B cell (primary cell): ENCODE measurements at regions of chr12 and their contacts with region 1.

Region 1: DNA sequence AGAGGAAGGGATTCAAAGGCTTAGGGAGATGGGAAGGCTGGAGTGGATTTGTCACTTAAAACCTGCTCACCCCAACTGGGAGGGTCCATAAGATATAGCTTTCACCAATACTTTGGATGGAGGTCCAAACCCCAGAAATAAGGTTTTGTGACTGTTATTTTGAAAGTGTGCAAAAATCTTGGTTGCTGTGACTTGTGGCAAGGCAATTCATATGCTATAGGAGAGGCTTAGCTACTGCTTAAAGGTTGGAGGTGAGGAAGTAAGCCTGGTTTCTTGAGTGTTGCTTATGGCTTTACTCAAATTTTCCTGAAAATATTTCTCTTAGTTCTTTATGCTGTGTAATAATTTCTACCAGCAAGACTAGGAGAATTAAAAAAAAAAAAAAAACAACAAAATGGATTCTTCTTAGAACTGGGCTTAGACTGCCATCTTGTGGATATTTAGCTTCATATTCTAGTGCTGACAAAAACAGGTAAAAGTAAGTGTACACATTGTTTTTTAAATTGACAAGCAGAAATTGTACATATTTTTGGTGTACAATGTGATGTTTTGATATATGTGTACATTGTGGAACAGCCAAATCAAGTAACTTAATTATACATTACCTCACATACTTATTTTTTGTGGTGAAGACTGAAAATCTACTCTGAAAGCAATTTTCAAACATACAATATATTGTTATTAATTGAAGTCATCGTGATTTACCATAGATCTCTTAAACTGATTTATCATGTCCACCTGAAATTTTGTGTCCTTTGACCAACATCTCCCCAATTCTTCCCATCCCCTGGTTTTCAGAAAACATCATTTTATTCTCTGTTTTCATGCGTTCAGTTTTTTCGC is 23.0 kb downstream of the PDE6H start:
- DNase-seq: peak; percentile 79
- ATAC-seq: peak; percentile 45
- H3K4me3 ChIP-seq: no peak overlapping the region
- H3K4me3 Mint-ChIP-seq: no peak overlapping the region
- H3K27ac ChIP-seq: no peak overlapping the region
- H3K27ac Mint-ChIP-seq: peak overlapping the region; percentile 38
- H3K4me1 ChIP-seq: peaks cover 34 to 36% of the 10 kb centered on the region in 2 donors
- H3K4me1 Mint-ChIP-seq: peaks cover 39% of the 10 kb centered on the region
- H3K27me3 ChIP-seq: peaks cover 0 to 4% (median 1%) of the 10 kb centered on the region in 4 experiments
- H3K27me3 Mint-ChIP-seq: peaks cover 5% of the 10 kb centered on the region
- CTCF ChIP-seq: peak; percentile 83

Region 2: DNA sequence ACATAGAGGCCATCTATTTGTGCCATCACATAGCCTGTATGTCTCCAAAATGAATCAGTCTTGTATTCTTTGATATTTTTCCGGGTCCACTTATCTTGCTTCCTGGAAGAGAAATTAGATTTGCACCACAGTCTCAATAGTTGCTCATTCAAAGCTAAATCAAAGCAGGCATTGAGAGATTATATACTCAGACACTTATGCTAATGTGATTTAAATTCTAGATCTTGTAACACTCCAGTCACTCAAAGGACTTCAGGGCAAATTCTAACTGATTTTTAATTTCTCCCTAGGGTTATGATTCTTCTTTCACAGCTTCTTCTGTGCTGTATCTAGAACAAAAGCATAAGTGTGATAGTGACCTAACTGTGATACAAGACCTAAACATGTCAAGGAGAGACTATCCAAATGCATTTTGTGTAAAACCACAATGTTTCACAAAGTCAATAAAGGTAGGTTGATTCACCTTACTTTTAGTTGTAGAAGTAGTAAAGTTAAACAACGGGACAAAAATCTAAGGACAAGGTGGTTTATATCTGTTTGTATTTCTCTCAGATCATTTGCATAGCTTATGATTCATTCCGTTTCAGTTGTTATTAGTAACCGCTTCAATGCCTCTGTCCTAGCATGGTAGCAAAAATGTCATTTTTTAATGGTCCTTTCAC is 454.9 kb before region 1 on chr12:
- CTCF ChIA-PET with region 1: no interaction called
- POLR2A ChIA-PET with region 1: no interaction called
- intact Hi-C with region 1: no loop called
- DNase-seq: no peak
- ATAC-seq: no peak
- H3K4me3 ChIP-seq: no peak overlapping the region
- H3K4me3 Mint-ChIP-seq: no peak overlapping the region
- H3K27ac ChIP-seq: no peak overlapping the region
- H3K27ac Mint-ChIP-seq: no peak overlapping the region
- H3K4me1 ChIP-seq: no peaks in the 10 kb centered on the region
- H3K4me1 Mint-ChIP-seq: peaks cover 2% of the 10 kb centered on the region
- H3K27me3 ChIP-seq: no peaks in the 10 kb centered on the region
- H3K27me3 Mint-ChIP-seq: no peaks in the 10 kb centered on the region
- CTCF ChIP-seq: no peak

Region 3: DNA sequence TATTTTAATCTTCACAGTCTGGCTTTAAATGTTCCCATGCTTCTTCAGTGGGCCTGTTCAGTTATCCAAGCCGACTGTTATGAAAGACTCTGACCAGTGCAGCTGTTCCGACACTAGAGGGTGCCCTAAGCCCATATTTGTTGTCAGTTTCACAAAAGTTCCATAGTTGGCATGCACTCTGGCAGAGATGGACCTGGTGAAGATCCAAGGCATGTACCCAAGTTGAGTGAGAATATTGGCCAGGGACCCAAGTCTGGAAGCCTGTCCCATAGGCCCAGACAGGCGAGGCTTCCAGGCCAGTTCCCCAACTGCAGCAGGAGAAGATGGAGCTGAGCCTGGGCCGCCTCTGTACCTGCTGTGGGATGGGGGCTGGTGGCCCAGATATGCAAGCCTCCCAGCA is 272.0 kb before region 1 on chr12:
- CTCF ChIA-PET with region 1: interaction called, 26 read pairs
- POLR2A ChIA-PET with region 1: no interaction called
- intact Hi-C with region 1: loop called (anchors 1 kb)
- DNase-seq: peak; percentile 65
- ATAC-seq: peak; percentile 56
- H3K4me3 ChIP-seq: no peak overlapping the region
- H3K4me3 Mint-ChIP-seq: no peak overlapping the region
- H3K27ac ChIP-seq: no peak overlapping the region
- H3K27ac Mint-ChIP-seq: no peak overlapping the region
- H3K4me1 ChIP-seq: no peaks in the 10 kb centered on the region
- H3K4me1 Mint-ChIP-seq: no peaks in the 10 kb centered on the region
- H3K27me3 ChIP-seq: no peaks in the 10 kb centered on the region
- H3K27me3 Mint-ChIP-seq: peaks cover 13% of the 10 kb centered on the region
- CTCF ChIP-seq: peak; percentile 79

Region 4: GRCh38 chr12:14845350-14845750 is 150.5 kb before region 1 on chr12:
- CTCF ChIA-PET with region 1: interaction called, 192 read pairs
- POLR2A ChIA-PET with region 1: no interaction called
- intact Hi-C with region 1: loop called (anchors 1 kb)
- DNase-seq: peak; percentile 72
- ATAC-seq: peak; percentile 81
- H3K4me3 ChIP-seq: no peak overlapping the region
- H3K4me3 Mint-ChIP-seq: no peak overlapping the region
- H3K27ac ChIP-seq: no peak overlapping the region
- H3K27ac Mint-ChIP-seq: no peak overlapping the region
- H3K4me1 ChIP-seq: peaks cover 0 to 4% of the 10 kb centered on the region in 2 donors
- H3K4me1 Mint-ChIP-seq: peaks cover 9% of the 10 kb centered on the region
- H3K27me3 ChIP-seq: no peaks in the 10 kb centered on the region
- H3K27me3 Mint-ChIP-seq: no peaks in the 10 kb centered on the region
- CTCF ChIP-seq: peak; percentile 77

Region 5: GRCh38 chr12:14920475-14921126 is 75.2 kb before region 1 on chr12:
- CTCF ChIA-PET with region 1: interaction called, 17 read pairs
- POLR2A ChIA-PET with region 1: no interaction called
- intact Hi-C with region 1: no loop called
- DNase-seq: peak; percentile 25
- ATAC-seq: peak; percentile 65
- H3K4me3 ChIP-seq: peak overlapping the region in 1 of 5 experiments; percentile 4
- H3K4me3 Mint-ChIP-seq: peak overlapping the region; percentile 45
- H3K27ac ChIP-seq: peak overlapping the region in 1 of 2 donors; percentile 67
- H3K27ac Mint-ChIP-seq: peak overlapping the region; percentile 76
- H3K4me1 ChIP-seq: peaks cover 7 to 15% of the 10 kb centered on the region in 2 donors
- H3K4me1 Mint-ChIP-seq: peaks cover 16% of the 10 kb centered on the region
- H3K27me3 ChIP-seq: no peaks in the 10 kb centered on the region
- H3K27me3 Mint-ChIP-seq: no peaks in the 10 kb centered on the region
- CTCF ChIP-seq: no peak

Region 6: GRCh38 chr12:14960548-14961465 is 35.0 kb before region 1 on chr12:
- CTCF ChIA-PET with region 1: interaction called, 13 read pairs
- POLR2A ChIA-PET with region 1: interaction called, 3 read pairs
- intact Hi-C with region 1: loop called (anchors 1 kb)
- DNase-seq: no peak
- ATAC-seq: peak; percentile 64
- H3K4me3 ChIP-seq: peak overlapping the region; percentile 65 to 99 (median 84)
- H3K4me3 Mint-ChIP-seq: peak overlapping the region; percentile 97
- H3K27ac ChIP-seq: peak overlapping the region; percentile 68 to 94
- H3K27ac Mint-ChIP-seq: peak overlapping the region; percentile 98
- H3K4me1 ChIP-seq: peaks cover 45 to 55% of the 10 kb centered on the region in 2 donors
- H3K4me1 Mint-ChIP-seq: peaks cover 72% of the 10 kb centered on the region
- H3K27me3 ChIP-seq: no peaks in the 10 kb centered on the region
- H3K27me3 Mint-ChIP-seq: no peaks in the 10 kb centered on the region
- CTCF ChIP-seq: no peak

Region 7: DNA sequence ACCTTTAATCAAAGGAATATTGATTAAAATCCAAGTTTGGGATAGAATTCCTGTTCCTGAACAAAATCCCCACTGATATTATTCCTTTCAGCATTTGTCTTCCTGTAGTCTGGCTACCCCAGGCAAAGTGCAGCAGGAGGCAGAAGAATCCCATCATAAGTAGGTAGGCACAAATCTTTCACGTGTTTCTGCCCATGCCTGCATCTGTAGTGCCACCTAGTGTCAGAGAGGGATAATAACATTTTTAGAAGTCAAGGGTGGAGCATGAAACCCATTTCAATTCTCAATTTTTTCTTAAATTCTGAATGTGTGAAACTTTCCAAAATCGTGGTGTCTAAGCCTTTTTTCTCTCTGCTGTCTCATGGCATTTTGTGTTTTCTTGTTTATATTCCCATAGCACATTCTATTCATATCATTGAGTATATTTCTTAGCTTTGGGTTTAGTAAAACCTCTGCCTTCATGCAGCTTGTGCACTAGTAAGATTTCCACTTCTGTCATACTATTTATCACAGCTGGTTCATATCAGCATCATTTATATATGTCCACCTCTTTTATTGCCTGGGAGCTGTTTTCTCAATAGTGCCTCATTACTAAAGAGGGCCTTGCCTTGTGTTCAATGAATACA is 273.2 kb after region 1 on chr12:
- CTCF ChIA-PET with region 1: interaction called, 6 read pairs
- POLR2A ChIA-PET with region 1: no interaction called
- intact Hi-C with region 1: loop called (anchors 10 kb)
- DNase-seq: peak; percentile 63
- ATAC-seq: peak; percentile 71
- H3K4me3 ChIP-seq: no peak overlapping the region
- H3K4me3 Mint-ChIP-seq: no peak overlapping the region
- H3K27ac ChIP-seq: no peak overlapping the region
- H3K27ac Mint-ChIP-seq: no peak overlapping the region
- H3K4me1 ChIP-seq: no peaks in the 10 kb centered on the region
- H3K4me1 Mint-ChIP-seq: no peaks in the 10 kb centered on the region
- H3K27me3 ChIP-seq: no peaks in the 10 kb centered on the region
- H3K27me3 Mint-ChIP-seq: peaks cover 3% of the 10 kb centered on the region
- CTCF ChIP-seq: peak; percentile 97

Region 8: GRCh38 chr12:16857456-16857923 is 1861.7 kb after region 1 on chr12:
- CTCF ChIA-PET with region 1: no interaction called
- POLR2A ChIA-PET with region 1: no interaction called
- intact Hi-C with region 1: no loop called
- DNase-seq: no peak
- ATAC-seq: no peak
- H3K4me3 ChIP-seq: no peak overlapping the region
- H3K4me3 Mint-ChIP-seq: no peak overlapping the region
- H3K27ac ChIP-seq: no peak overlapping the region
- H3K27ac Mint-ChIP-seq: no peak overlapping the region
- H3K4me1 ChIP-seq: no peaks in the 10 kb centered on the region
- H3K4me1 Mint-ChIP-seq: no peaks in the 10 kb centered on the region
- H3K27me3 ChIP-seq: no peaks in the 10 kb centered on the region
- H3K27me3 Mint-ChIP-seq: no peaks in the 10 kb centered on the region
- CTCF ChIP-seq: no peak